CD8-positive, alpha-beta T cell (primary cell): ENCODE measurements at regions of chr22 and their contacts with region 1.

Region 1: GRCh38 chr22:49936018-49936952 is 17.9 kb downstream of the CRELD2 start:
- DNase-seq: peak; percentile 80 to 96 (median 92)
- ATAC-seq: peak; percentile 79
- H3K4me3 ChIP-seq: peak overlapping the region; percentile 43 to 47
- H3K4me3 Mint-ChIP-seq: peak overlapping the region; percentile 67
- H3K27ac ChIP-seq: peak overlapping the region; percentile 56 to 82
- H3K27ac Mint-ChIP-seq: peak overlapping the region; percentile 85
- H3K4me1 ChIP-seq: peaks cover 26% of the 10 kb centered on the region
- H3K4me1 Mint-ChIP-seq: peaks cover 16% of the 10 kb centered on the region
- H3K27me3 ChIP-seq: no peaks in the 10 kb centered on the region
- H3K27me3 Mint-ChIP-seq: no peaks in the 10 kb centered on the region
- CTCF ChIP-seq: no peak

Region 2: GRCh38 chr22:49948958-49949913 is 13.0 kb after region 1 on chr22:
- CTCF ChIA-PET with region 1: interaction called, 7 read pairs
- POLR2A ChIA-PET with region 1: no interaction called
- intact Hi-C with region 1: loop called in 1 of 2 experiments (anchors 1 kb)
- DNase-seq: no peak
- ATAC-seq: no peak
- H3K4me3 ChIP-seq: no peak overlapping the region
- H3K4me3 Mint-ChIP-seq: no peak overlapping the region
- H3K27ac ChIP-seq: no peak overlapping the region
- H3K27ac Mint-ChIP-seq: no peak overlapping the region
- H3K4me1 ChIP-seq: peaks cover 20% of the 10 kb centered on the region
- H3K4me1 Mint-ChIP-seq: peaks cover 11% of the 10 kb centered on the region
- H3K27me3 ChIP-seq: no peaks in the 10 kb centered on the region
- H3K27me3 Mint-ChIP-seq: no peaks in the 10 kb centered on the region
- CTCF ChIP-seq: no peak

Region 3: DNA sequence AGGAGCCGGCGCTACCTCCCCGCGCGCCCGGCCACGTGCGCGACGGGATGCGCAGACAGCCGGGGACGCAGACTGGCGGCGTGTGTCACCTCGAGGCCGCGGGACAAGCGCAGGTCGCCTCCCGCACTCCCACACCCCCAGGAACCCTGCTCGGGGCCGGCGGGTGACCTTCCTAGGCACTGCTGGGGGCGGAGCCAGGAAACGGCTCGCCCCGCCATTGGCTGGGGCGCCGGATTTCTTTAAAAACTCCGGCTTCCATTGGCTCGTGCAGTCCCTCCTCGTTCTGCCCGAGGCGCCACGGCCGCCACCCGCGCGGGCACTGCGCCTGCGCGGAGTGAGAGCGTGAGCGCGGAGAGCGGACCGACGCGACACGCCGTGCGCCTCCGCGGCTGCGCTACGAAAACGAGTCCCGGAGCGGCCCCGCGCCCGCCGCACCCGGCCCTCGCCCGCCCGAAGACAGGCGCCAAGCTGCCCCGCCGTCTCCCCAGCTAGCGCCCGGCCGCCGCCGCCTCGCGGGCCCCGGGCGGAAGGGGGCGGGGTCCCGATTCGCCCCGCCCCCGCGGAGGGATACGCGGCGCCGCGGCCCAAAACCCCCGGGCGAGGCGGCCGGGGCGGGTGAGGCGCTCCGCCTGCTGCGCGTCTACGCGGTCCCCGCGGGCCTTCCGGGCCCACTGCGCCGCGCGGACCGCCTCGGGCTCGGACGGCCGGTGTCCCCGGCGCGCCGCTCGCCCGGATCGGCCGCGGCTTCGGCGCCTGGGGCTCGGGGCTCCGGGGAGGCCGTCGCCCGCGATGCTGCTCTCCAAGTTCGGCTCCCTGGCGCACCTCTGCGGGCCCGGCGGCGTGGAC is 24.1 kb after region 1 on chr22 and contains the start of gene PIM3:
- CTCF ChIA-PET with region 1: no interaction called
- POLR2A ChIA-PET with region 1: interaction called, 20 read pairs
- intact Hi-C with region 1: loop called (anchors 1 kb)
- DNase-seq: peak; percentile 80 to 96 (median 90)
- ATAC-seq: peak; percentile 61
- H3K4me3 ChIP-seq: peak within 1 kb of the TSS; percentile 67 to 86
- H3K4me3 Mint-ChIP-seq: peak within 1 kb of the TSS; percentile 93
- H3K27ac ChIP-seq: peak within 1 kb of the TSS; percentile 71 to 80
- H3K27ac Mint-ChIP-seq: peak within 1 kb of the TSS; percentile 95
- H3K4me1 ChIP-seq: peaks cover 33% of the 10 kb centered on the region
- H3K4me1 Mint-ChIP-seq: peaks cover 17% of the 10 kb centered on the region
- H3K27me3 ChIP-seq: no peaks in the 10 kb centered on the region
- H3K27me3 Mint-ChIP-seq: no peaks in the 10 kb centered on the region
- CTCF ChIP-seq: no peak
- total RNA-seq, gene PIM3: 316 to 328 TPM

Region 4: GRCh38 chr22:49970528-49971231 is 34.4 kb after region 1 on chr22:
- CTCF ChIA-PET with region 1: interaction called, 6 read pairs
- POLR2A ChIA-PET with region 1: interaction called, 5 read pairs
- intact Hi-C with region 1: loop called (anchors 2 kb)
- DNase-seq: peak; percentile 85 to 98 (median 94)
- ATAC-seq: peak; percentile 86
- H3K4me3 ChIP-seq: peak overlapping the region; percentile 34 to 55
- H3K4me3 Mint-ChIP-seq: peak overlapping the region; percentile 75
- H3K27ac ChIP-seq: peak overlapping the region; percentile 50 to 77
- H3K27ac Mint-ChIP-seq: peak overlapping the region; percentile 93
- H3K4me1 ChIP-seq: peaks cover 26% of the 10 kb centered on the region
- H3K4me1 Mint-ChIP-seq: peaks cover 24% of the 10 kb centered on the region
- H3K27me3 ChIP-seq: no peaks in the 10 kb centered on the region
- H3K27me3 Mint-ChIP-seq: no peaks in the 10 kb centered on the region
- CTCF ChIP-seq: no peak